ENCODE measurements at regions of chr9 and their contacts with region 1.

Region 1: DNA sequence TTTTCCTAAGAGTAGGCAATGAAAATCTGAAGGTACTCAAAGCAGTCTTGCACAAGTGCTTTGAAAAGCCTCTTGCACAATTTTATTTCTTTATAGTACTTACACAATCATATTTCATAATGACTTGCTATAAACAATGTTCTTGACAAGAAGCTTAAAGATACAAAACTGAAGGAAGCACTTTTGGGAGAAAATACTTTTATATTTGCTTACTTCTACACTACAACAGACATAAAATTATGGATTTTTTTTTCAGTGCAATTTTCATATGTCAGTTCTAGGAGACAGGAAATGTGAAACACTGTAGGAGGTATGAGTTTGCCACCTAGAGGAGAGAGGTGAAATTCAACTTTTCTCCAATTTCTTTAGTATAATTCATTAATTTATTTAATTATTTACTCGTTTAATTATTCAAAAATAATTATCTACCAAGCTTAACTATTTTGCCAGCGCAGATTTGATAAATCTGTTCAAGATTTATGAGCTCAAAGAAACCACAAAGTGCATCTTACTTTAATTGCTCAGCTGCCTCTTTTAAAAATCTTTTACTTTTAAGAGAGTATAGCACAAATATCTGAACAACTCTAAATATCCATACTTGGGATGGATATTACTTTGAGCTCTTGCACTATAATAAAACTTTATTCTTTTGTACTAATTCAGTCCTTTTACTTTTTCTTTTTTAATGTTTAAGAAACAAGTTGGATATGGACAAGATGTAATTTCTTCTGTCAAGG is 29.0 kb upstream of the CDKN2B start:
- H3K4me3 ChIP-seq: no peak overlapping the region
- H3K27ac ChIP-seq: no peak overlapping the region
- H3K4me1 ChIP-seq: peaks cover 10% of the 10 kb centered on the region; the same call in 1 of the 2 replicates
- CTCF ChIP-seq: no peak

Region 2: DNA sequence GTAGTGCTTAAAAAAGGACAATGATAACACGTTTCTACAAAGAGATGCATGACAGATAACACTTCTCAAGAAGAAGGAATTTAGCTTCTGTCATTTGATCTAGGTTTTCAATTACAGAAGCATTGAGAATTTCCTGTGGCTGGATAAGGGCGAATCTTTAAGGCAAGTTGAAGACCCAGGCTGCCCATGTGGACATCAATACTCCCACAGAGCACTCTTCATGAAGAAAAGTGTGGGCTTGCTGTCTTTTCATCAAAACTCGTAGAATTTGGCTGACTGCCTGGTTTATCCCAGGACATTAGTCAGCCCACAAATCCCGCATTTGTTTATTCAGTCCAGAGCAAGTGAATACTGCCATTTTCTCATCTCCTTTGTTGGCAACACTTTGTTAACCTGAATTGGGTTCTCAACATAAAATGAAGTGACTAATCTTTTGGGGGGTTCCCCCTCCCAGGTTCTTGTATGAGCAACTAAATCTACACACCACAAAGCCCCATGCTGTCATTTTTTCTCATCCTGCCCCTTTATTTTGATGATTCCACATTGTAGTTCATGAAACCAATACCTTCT is 14.3 kb after region 1 on chr9:
- CTCF ChIA-PET with region 1: interaction called, 16 read pairs
- POLR2A ChIA-PET with region 1: no interaction called
- H3K4me3 ChIP-seq: no peak overlapping the region
- H3K27ac ChIP-seq: peak overlapping the region; percentile 64
- H3K4me1 ChIP-seq: peaks cover 15% of the 10 kb centered on the region
- CTCF ChIP-seq: no peak

Region 3: GRCh38 chr9:22105005-22105722 is 67.0 kb after region 1 on chr9:
- CTCF ChIA-PET with region 1: interaction called, 17 read pairs
- POLR2A ChIA-PET with region 1: no interaction called
- H3K4me3 ChIP-seq: no peak overlapping the region
- H3K27ac ChIP-seq: no peak overlapping the region
- H3K4me1 ChIP-seq: peaks cover 8% of the 10 kb centered on the region; the same call in 1 of the 2 replicates
- CTCF ChIP-seq: no peak

Region 4: GRCh38 chr9:22111954-22112247 is 73.8 kb after region 1 on chr9:
- CTCF ChIA-PET with region 1: interaction called, 48 read pairs
- POLR2A ChIA-PET with region 1: no interaction called
- H3K4me3 ChIP-seq: no peak overlapping the region
- H3K27ac ChIP-seq: no peak overlapping the region
- H3K4me1 ChIP-seq: peaks cover 12% of the 10 kb centered on the region
- CTCF ChIP-seq: no peak